CD4-positive, alpha-beta T cell (primary cell): ENCODE measurements at regions of chr10 and their contacts with region 1.

Region 1: DNA sequence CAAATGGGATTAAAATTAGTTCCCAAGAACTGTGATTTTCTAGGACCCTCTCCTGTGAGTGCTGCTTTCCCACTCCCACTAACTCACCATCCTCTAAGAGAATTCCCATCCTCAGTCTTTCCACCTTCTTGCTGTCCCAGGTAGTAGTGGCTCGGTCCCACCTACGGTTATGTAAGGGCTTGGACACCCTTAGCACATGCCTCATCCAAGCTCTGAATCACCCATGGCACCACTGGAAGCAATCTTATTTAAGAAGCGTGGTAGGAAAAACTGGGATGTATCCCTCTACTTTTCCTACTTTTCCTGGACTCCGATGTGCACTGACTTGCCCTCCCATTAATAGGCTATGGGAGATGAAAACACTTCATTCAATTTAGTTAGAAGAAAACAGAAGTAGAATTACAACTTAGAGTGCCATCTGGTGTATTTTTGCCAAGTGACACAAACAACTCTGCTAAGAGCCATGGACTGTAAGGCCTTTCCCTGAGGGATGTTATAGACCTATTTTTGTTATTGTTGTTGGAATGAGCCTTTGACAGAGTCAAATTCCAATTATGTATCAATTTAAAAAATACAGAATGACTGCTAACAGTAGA is 13.7 kb upstream of the ANKRD22 start:
- DNase-seq: peak in 2 of 14 experiments; percentile 20 to 28
- ATAC-seq: no peak
- H3K4me3 ChIP-seq: no peak overlapping the region
- H3K4me3 Mint-ChIP-seq: no peak overlapping the region
- H3K27ac ChIP-seq: no peak overlapping the region
- H3K27ac Mint-ChIP-seq: no peak overlapping the region
- H3K4me1 ChIP-seq: no peaks in the 10 kb centered on the region
- H3K4me1 Mint-ChIP-seq: no peaks in the 10 kb centered on the region
- H3K27me3 ChIP-seq: no peaks in the 10 kb centered on the region
- H3K27me3 Mint-ChIP-seq: no peaks in the 10 kb centered on the region
- CTCF ChIP-seq: peak; percentile 12

Region 2: DNA sequence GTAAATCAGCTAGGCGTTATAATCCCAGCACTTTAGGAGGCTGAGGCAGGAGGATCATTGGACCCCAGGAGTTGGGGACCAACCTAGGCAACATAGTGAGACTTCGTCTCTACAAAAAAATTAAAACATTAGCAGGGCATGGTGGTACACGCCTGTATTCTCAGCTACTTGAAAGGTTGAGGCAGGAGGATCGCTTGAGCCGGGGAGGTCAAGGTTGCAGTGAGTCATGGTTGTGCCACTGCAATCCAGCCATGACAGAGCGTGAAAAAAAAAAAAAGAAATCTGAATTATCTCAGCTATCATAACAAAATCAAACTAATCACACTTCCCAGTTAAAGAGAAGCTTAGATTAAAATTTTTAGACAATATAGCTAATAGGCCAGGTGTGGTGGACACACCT is 1082.7 kb before region 1 on chr10:
- CTCF ChIA-PET with region 1: no interaction called
- POLR2A ChIA-PET with region 1: no interaction called
- intact Hi-C with region 1: no loop called
- DNase-seq: no peak
- ATAC-seq: no peak
- H3K4me3 ChIP-seq: no peak overlapping the region
- H3K4me3 Mint-ChIP-seq: no peak overlapping the region
- H3K27ac ChIP-seq: no peak overlapping the region
- H3K27ac Mint-ChIP-seq: no peak overlapping the region
- H3K4me1 ChIP-seq: no peaks in the 10 kb centered on the region
- H3K4me1 Mint-ChIP-seq: peaks cover 28% of the 10 kb centered on the region
- H3K27me3 ChIP-seq: no peaks in the 10 kb centered on the region
- H3K27me3 Mint-ChIP-seq: no peaks in the 10 kb centered on the region
- CTCF ChIP-seq: no peak

Region 3: GRCh38 chr10:88693392-88694020 is 171.9 kb before region 1 on chr10:
- CTCF ChIA-PET with region 1: no interaction called
- POLR2A ChIA-PET with region 1: no interaction called
- intact Hi-C with region 1: loop called in 1 of 2 experiments (anchors 10 kb)
- DNase-seq: no peak
- ATAC-seq: no peak
- H3K4me3 ChIP-seq: no peak overlapping the region
- H3K4me3 Mint-ChIP-seq: no peak overlapping the region
- H3K27ac ChIP-seq: no peak overlapping the region
- H3K27ac Mint-ChIP-seq: no peak overlapping the region
- H3K4me1 ChIP-seq: no peaks in the 10 kb centered on the region
- H3K4me1 Mint-ChIP-seq: no peaks in the 10 kb centered on the region
- H3K27me3 ChIP-seq: no peaks in the 10 kb centered on the region
- H3K27me3 Mint-ChIP-seq: no peaks in the 10 kb centered on the region
- CTCF ChIP-seq: peak; percentile 38

Region 4: DNA sequence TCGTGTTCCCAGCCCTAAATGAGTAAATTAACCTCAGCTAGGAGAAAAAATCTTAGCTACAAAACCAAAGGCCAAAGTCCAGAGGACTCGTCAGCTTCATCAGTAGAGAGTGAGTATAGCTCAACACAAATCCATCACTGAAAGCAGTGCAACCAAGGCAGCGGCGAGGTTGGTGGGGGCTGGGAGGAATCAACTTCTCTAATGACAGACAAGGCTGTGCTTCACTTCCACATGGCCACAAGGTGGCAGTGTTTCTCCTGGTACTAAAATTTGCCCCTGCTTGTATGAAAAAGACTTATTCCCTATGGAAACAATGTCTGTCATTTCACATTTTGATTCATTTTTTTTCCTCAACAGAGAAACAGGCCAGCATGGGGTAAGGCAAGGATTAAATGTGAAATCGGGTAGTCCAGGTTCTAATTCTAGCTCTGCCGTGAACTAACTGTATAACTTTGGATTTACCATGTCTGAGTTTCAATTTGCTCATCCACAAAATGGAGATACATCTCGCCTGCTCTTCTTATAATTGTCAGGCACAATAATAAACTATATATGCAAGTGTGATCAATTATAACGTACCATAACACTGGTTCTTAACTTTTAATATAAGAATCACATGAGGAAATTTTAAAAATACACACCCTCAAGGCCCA is 164.5 kb after region 1 on chr10:
- CTCF ChIA-PET with region 1: no interaction called
- POLR2A ChIA-PET with region 1: no interaction called
- intact Hi-C with region 1: no loop called
- DNase-seq: peak; percentile 44 to 84 (median 58)
- ATAC-seq: peak; percentile 80
- H3K4me3 ChIP-seq: no peak overlapping the region
- H3K4me3 Mint-ChIP-seq: no peak overlapping the region
- H3K27ac ChIP-seq: no peak overlapping the region
- H3K27ac Mint-ChIP-seq: no peak overlapping the region
- H3K4me1 ChIP-seq: peaks cover 3% of the 10 kb centered on the region
- H3K4me1 Mint-ChIP-seq: peaks cover 9% of the 10 kb centered on the region
- H3K27me3 ChIP-seq: no peaks in the 10 kb centered on the region
- H3K27me3 Mint-ChIP-seq: no peaks in the 10 kb centered on the region
- CTCF ChIP-seq: peak; percentile 93

Region 5: DNA sequence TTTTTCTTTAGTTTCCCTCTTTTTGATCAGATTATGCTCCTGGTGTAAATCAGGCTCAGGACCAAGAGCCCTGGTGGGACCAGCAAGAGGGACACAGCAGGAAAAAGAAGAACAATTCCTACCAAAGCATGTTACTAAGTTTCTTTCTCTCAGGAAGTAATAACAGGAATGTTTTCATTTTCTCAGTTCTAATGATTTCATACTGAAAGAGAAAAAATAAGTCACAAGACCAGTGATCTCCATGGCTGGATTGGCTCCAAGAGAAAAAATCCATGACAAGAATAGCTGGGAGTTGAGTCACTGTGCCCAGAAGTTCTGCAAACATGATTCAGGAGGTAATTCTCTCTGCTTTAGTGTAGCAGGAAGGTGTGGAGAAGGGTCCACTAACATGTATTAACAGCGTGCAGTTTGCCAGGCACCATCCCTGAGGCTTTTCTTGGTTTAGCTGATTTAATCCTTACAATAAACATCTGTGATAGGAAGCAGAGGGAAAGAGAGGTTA is 412.7 kb after region 1 on chr10:
- CTCF ChIA-PET with region 1: no interaction called
- POLR2A ChIA-PET with region 1: no interaction called
- intact Hi-C with region 1: no loop called
- DNase-seq: no peak
- ATAC-seq: no peak
- H3K4me3 ChIP-seq: no peak overlapping the region
- H3K4me3 Mint-ChIP-seq: no peak overlapping the region
- H3K27ac ChIP-seq: no peak overlapping the region
- H3K27ac Mint-ChIP-seq: no peak overlapping the region
- H3K4me1 ChIP-seq: no peaks in the 10 kb centered on the region
- H3K4me1 Mint-ChIP-seq: no peaks in the 10 kb centered on the region
- H3K27me3 ChIP-seq: no peaks in the 10 kb centered on the region
- H3K27me3 Mint-ChIP-seq: no peaks in the 10 kb centered on the region
- CTCF ChIP-seq: no peak